Head of caudate nucleus (tissue), 42 donors: ENCODE measurements at regions of chr14 and their contacts with region 1.

Region 1: DNA sequence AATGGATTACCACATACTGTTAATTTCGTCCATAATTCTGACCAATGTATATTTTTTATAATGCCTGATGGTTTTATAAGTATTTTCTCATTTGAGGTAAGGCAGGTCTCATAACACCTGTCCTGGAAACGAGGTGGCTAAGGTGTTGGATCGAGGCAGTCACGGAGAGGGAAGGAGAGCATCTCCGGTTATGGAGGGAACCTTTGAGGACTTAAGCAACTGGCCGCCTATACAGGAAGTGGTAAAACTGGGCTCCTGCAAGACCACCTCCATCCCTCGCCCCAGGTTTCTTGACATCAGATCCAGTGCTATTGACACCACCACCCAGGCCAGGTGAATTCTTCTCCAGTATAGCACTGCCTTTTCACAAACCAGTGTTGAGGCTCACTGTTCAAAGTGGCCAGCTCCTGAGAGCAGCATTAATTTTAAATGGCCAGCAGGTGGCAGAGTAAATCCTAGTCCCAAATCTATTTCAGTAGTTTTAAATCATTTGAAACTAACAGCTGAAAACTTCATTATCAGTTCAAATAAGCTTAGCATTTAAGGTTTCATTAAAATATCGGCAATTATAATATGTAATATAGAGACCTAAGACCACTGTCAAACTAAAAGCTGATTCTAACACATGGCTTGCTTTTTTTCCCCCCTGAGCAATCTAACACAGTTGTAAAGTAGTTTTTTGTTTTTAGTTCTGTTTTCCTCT is 100.8 kb downstream of the PPM1A start:
- DNase-seq: peak in 29 of 42 donors; percentile 4 to 77 (median 42)

Region 2: DNA sequence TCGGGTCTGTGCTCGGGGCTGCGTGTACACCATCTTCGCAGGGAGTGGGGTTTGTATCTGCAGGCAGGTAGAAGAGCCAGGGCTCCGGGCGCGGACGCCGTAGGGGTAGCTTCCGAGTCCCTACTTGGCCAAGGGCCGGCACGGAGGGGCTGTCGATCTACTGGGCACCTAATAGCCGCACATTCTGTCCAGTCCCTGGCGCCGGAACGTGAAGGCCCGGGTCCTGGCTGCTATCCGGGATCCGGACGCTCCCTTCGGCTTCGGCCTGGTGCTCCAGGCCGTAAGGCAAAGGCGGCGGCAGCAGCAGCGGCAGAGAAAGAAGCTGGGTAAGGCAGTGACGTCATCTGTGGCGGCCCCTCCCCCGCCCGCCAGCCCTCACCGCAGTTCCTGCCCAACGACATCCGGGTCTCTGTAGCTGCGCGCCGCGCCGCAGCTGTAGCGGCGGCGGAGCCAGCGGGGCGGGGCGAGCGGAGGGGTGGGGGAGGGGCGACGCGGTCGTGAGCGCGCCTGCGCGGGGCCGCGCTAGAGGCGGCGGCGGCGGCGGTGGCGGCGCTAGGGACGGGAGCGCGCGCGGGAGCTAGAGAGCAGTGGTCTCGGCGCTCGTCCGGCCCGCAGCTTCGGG is 101.0 kb before region 1 on chr14 and contains the start of gene PPM1A:
- intact Hi-C with region 1: no loop called
- DNase-seq: peak; percentile 86 to 98 (median 95)

Region 3: GRCh38 chr14:60561845-60562746 is 212.3 kb after region 1 on chr14:
- intact Hi-C with region 1: loop called (anchors 10 kb)
- DNase-seq: peak in 34 of 42 donors; percentile 7 to 73 (median 40)